ENCODE measurements at regions of chr1 and their contacts with region 1.

Region 1: DNA sequence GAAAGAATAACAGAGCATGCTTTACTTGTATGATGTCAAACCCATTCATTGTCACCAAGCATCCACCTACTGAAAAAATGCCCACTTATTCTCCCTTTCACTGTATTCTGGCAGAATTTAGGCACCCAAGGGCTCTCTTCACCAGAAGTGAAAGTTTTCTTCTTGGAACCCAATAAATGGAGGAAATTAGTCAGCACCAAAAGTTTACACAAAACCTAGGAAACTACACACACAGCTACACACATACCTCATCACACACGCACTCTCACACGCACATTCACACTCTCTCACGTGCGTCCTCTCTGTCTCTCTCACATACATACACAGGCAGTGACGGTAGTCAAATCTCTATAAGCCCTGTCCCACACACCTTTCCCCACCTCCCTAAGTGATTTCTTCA is 37.6 kb downstream of the MCOLN2 start:
- DNase-seq: peak; percentile 41
- H3K4me3 Mint-ChIP-seq: peak overlapping the region; percentile 27
- H3K27ac Mint-ChIP-seq: peak overlapping the region; percentile 59
- H3K4me1 Mint-ChIP-seq: peaks cover 24% of the 10 kb centered on the region
- H3K27me3 Mint-ChIP-seq: no peaks in the 10 kb centered on the region

Region 2: DNA sequence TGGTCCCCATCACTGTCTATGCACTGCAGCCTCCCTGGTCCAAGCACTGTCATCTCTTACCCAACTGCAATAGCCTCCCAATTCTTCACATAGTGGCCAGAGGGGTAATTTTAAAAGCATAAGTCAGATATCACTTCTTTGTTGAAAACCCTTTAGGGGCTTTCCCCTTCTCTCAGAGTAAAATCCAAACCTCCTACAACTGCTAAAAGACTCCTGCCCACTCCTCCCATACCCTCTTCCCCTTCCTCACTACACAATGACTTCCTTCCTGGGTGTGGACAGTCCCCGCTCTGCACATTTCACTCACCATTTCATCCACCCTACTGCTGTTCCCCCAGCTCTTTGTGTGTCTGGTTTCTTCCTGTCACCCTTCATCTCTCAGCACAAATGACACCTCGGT is 29.3 kb after region 1 on chr1:
- intact Hi-C with region 1: loop called (anchors 1 kb)
- DNase-seq: peak; percentile 19
- H3K4me3 Mint-ChIP-seq: peak overlapping the region; percentile 45
- H3K27ac Mint-ChIP-seq: peak overlapping the region; percentile 75
- H3K4me1 Mint-ChIP-seq: peaks cover 71% of the 10 kb centered on the region
- H3K27me3 Mint-ChIP-seq: no peaks in the 10 kb centered on the region

Region 3: GRCh38 chr1:85027242-85027983 is 68.1 kb after region 1 on chr1:
- intact Hi-C with region 1: loop called (anchors 1 kb)
- DNase-seq: no peak
- H3K4me3 Mint-ChIP-seq: no peak overlapping the region
- H3K27ac Mint-ChIP-seq: peak overlapping the region; percentile 53
- H3K4me1 Mint-ChIP-seq: peaks cover 10% of the 10 kb centered on the region
- H3K27me3 Mint-ChIP-seq: peaks cover 6% of the 10 kb centered on the region

Region 4: GRCh38 chr1:85061711-85062424 is 102.6 kb after region 1 on chr1:
- intact Hi-C with region 1: loop called (anchors 1 kb)
- DNase-seq: peak; percentile 87
- H3K4me3 Mint-ChIP-seq: peak overlapping the region; percentile 85
- H3K27ac Mint-ChIP-seq: peak overlapping the region; percentile 62
- H3K4me1 Mint-ChIP-seq: peaks cover 15% of the 10 kb centered on the region
- H3K27me3 Mint-ChIP-seq: peaks cover 16% of the 10 kb centered on the region

Region 5: DNA sequence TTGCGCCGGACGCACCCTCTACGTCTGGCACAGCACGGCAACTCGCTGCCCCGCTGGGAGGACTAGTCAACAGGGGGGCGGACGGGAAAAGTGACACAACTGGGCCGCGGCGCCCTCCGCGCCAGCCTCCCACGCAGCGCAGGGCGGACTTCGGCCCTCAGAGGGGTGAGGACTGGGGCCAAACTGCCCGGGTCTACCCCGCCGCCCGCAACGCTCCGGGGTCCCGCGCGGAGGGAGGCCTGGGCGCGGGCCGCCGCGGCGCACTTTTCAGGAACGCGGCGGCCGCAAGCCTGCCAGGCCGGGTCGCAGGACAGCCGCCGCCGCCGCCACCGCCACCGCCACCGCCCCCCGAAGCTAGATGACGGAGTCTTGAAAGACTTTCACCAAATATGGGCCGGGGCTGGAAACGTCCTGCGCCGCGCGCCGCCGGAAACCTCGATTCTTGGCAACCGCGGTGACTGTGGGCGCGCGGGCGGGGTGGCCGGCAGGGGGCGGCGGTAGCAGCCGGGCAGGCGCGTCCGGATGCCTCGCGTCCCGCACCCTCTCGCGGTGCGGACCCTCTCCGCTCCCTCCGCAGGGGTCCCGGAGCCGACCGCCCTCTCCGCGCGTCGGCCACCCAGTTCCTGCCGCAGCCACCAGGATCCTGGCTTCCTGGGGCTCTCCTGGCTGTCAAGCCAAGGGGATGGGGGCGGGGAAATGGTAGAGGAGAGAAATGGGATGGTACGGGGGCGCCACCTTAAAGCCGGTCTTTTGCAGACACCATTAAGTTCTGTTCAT is 617.5 kb after region 1 on chr1:
- intact Hi-C with region 1: loop called (anchors 5 kb)
- DNase-seq: peak; percentile 47
- H3K4me3 Mint-ChIP-seq: peak overlapping the region; percentile 71
- H3K27ac Mint-ChIP-seq: no peak overlapping the region
- H3K4me1 Mint-ChIP-seq: peaks cover 19% of the 10 kb centered on the region
- H3K27me3 Mint-ChIP-seq: peaks cover 73% of the 10 kb centered on the region

Measured in activated T-helper 1 cell treated with anti-CD3 and anti-CD28 coated beads, Interleukin-12 subunit alpha, Interleukin-12 subunit beta, Interleukin-2, Interleukin-4 antibody, amounts not matched to agents 30 ng/mL and 10 ng/mL and 1 ng/mL, durations not matched to agents 14 hours and 24 hours and 36 hours (primary cell).